ENCODE measurements at regions of chr7 and their contacts with region 1.

Region 1: GRCh38 chr7:93902777-93903423 is 3.5 kb upstream of the GNGT1 start:
- DNase-seq: no peak
- H3K4me3 Mint-ChIP-seq: no peak overlapping the region
- H3K27ac Mint-ChIP-seq: no peak overlapping the region
- H3K4me1 Mint-ChIP-seq: no peaks in the 10 kb centered on the region
- H3K27me3 Mint-ChIP-seq: peaks cover 7% of the 10 kb centered on the region

Region 2: GRCh38 chr7:94395141-94396036 is 492.5 kb after region 1 on chr7:
- CTCF ChIA-PET with region 1: interaction called, 3 read pairs
- POLR2A ChIA-PET with region 1: no interaction called
- intact Hi-C with region 1: loop called (anchors 2 kb)
- DNase-seq: peak; percentile 32
- H3K4me3 Mint-ChIP-seq: no peak overlapping the region
- H3K27ac Mint-ChIP-seq: no peak overlapping the region
- H3K4me1 Mint-ChIP-seq: peaks cover 6% of the 10 kb centered on the region
- H3K27me3 Mint-ChIP-seq: peaks cover 39% of the 10 kb centered on the region

Measured in activated CD4-positive, alpha-beta memory T cell treated with anti-CD3 and anti-CD28 coated beads for 36 hours (primary cell).